Panc1 (cell line): ENCODE measurements at regions of chr9 and their contacts with region 1.

Region 1: DNA sequence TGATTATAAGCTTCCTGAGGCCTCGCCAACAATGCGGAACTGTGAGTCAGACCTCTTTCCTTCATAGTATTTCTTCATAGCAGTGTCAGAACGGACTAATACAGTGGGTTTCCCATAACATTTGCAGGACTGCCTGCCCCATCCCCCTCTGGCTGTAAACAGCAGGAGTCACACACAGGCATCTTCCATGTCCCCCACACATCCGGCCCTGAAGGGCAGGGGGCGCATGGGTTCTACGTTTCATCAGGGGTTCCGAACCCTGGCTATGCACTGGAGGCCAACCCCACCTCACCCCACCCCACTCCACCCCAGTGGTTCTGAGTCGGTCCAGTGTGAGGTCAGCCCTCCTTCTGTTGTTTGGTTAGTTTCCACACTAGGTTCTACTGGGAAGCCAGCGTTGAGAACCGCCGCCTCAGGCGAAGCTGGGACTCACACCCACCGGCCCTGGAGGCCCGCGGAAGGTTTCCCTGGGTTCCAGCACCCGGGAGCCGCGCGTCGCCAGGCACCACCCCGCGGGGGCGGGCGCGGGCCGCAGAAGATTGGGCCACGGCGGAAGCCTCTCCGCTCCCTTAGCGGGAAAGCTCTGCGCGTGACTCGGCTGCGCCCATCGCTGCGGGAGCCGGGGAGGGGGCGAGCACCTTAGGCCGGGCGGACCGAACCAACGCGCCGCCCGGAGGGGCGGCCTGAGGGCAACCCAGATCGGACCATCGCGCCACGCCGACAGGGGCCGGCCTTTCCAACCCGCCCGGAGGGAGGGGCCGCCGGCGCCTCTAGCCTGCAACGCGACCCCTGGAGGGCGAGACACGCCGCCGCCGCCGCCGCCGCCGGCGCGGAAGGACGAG is at the start of gene RUSC2:
- DNase-seq: peak; percentile 67
- ATAC-seq: peak; percentile 80
- H3K4me3 ChIP-seq: peak within 1 kb of the TSS; percentile 73 to 85
- H3K27ac ChIP-seq: peak within 1 kb of the TSS; percentile 99
- H3K4me1 ChIP-seq: peaks cover 25% of the 10 kb centered on the region
- H3K27me3 ChIP-seq: no peaks in the 10 kb centered on the region
- CTCF ChIP-seq: peak; percentile 72
- total RNA-seq, gene RUSC2: 49.9 TPM

Region 2: GRCh38 chr9:35423499-35423898 is 66.0 kb before region 1 on chr9:
- CTCF ChIA-PET with region 1: no interaction called
- POLR2A ChIA-PET with region 1: no interaction called
- in situ Hi-C with region 1: no loop called
- intact Hi-C with region 1: no loop called
- DNase-seq: no peak
- ATAC-seq: no peak; the same call in 1 of the 2 replicates
- H3K4me3 ChIP-seq: no peak overlapping the region
- H3K27ac ChIP-seq: no peak overlapping the region
- H3K4me1 ChIP-seq: no peaks in the 10 kb centered on the region
- H3K27me3 ChIP-seq: no peaks in the 10 kb centered on the region; the same call in 1 of the 2 replicates
- CTCF ChIP-seq: no peak

Region 3: DNA sequence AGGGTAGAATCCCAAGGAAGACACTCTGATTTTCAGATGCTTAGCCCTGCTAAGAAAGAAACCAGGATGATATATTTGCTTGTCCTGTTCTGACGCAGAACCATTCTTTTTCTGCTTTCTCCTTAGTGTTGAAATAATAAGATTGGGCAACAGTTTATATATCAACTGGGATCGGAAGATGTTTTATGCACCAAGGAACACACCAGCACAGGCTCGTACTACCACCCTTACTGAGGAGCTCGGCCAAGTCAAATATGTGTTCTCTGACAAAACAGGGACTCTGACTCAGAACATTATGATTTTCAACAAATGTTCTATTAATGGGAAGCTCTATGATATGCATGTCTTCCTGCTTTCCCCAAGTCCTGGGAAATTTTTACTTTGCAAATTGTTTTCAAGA is 18.6 kb before region 1 on chr9:
- CTCF ChIA-PET with region 1: no interaction called
- POLR2A ChIA-PET with region 1: interaction called, 11 read pairs
- in situ Hi-C with region 1: no loop called
- intact Hi-C with region 1: no loop called
- DNase-seq: no peak
- ATAC-seq: no peak
- H3K4me3 ChIP-seq: no peak overlapping the region
- H3K27ac ChIP-seq: no peak overlapping the region
- H3K4me1 ChIP-seq: no peaks in the 10 kb centered on the region
- H3K27me3 ChIP-seq: no peaks in the 10 kb centered on the region
- CTCF ChIP-seq: no peak

Region 4: GRCh38 chr9:35548571-35548970 is 59.0 kb after region 1 on chr9:
- CTCF ChIA-PET with region 1: interaction called, 16 read pairs
- POLR2A ChIA-PET with region 1: interaction called, 20 read pairs
- in situ Hi-C with region 1: no loop called
- intact Hi-C with region 1: no loop called
- DNase-seq: no peak
- ATAC-seq: no peak; the same call in 1 of the 2 replicates
- H3K4me3 ChIP-seq: no peak overlapping the region
- H3K27ac ChIP-seq: peak overlapping the region; percentile 5; the same call in 1 of the 2 replicates
- H3K4me1 ChIP-seq: peaks cover 13% of the 10 kb centered on the region
- H3K27me3 ChIP-seq: no peaks in the 10 kb centered on the region
- CTCF ChIP-seq: no peak

Region 5: GRCh38 chr9:35566417-35566816 is 76.9 kb after region 1 on chr9:
- CTCF ChIA-PET with region 1: interaction called, 11 read pairs
- POLR2A ChIA-PET with region 1: interaction called, 6 read pairs
- in situ Hi-C with region 1: no loop called
- intact Hi-C with region 1: no loop called
- DNase-seq: no peak
- ATAC-seq: peak; percentile 47; the same call in 1 of the 2 replicates
- H3K4me3 ChIP-seq: no peak overlapping the region
- H3K27ac ChIP-seq: no peak overlapping the region
- H3K4me1 ChIP-seq: peaks cover 4% of the 10 kb centered on the region
- H3K27me3 ChIP-seq: no peaks in the 10 kb centered on the region
- CTCF ChIP-seq: no peak

Region 6: GRCh38 chr9:35847792-35848572 is 358.4 kb after region 1 on chr9:
- CTCF ChIA-PET with region 1: no interaction called
- POLR2A ChIA-PET with region 1: no interaction called
- in situ Hi-C with region 1: no loop called
- intact Hi-C with region 1: no loop called
- DNase-seq: no peak
- ATAC-seq: 0 out of 2 replicates have a peak, but pooled peaks have one; percentile 28
- H3K4me3 ChIP-seq: no peak overlapping the region
- H3K27ac ChIP-seq: no peak overlapping the region
- H3K4me1 ChIP-seq: no peaks in the 10 kb centered on the region; the same call in 1 of the 2 replicates
- H3K27me3 ChIP-seq: peaks cover 5% of the 10 kb centered on the region; the same call in 1 of the 2 replicates
- CTCF ChIP-seq: no peak